GM10248 (cell line): ENCODE measurements at regions of chr6 and their contacts with region 1.

Region 1: DNA sequence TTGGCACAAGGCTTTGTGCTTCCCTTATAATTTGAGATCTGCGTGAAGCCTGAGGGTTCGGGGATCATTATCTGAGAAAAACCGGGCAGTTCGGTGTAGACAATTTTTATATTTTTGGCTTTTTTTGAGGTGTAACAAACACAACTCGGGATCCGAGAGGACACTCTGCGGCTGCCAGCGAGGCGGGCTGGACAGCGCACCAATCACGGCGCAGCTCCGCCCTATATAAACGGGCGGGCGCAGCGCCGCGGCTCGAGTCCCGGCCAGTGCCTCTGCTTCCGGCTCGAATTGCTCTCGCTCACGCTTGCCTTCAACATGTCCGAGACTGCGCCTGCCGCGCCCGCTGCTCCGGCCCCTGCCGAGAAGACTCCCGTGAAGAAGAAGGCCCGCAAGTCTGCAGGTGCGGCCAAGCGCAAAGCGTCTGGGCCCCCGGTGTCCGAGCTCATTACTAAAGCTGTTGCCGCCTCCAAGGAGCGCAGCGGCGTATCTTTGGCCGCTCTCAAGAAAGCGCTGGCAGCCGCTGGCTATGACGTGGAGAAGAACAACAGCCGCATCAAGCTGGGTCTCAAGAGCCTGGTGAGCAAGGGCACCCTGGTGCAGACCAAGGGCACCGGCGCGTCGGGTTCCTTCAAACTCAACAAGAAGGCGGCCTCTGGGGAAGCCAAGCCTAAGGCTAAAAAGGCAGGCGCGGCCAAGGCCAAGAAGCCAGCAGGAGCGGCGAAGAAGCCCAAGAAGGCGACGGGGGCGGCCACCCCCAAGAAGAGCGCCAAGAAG is 69.0 kb downstream of the HFE start:
- DNase-seq: peak; percentile 89
- CTCF ChIP-seq: no peak

Region 2: DNA sequence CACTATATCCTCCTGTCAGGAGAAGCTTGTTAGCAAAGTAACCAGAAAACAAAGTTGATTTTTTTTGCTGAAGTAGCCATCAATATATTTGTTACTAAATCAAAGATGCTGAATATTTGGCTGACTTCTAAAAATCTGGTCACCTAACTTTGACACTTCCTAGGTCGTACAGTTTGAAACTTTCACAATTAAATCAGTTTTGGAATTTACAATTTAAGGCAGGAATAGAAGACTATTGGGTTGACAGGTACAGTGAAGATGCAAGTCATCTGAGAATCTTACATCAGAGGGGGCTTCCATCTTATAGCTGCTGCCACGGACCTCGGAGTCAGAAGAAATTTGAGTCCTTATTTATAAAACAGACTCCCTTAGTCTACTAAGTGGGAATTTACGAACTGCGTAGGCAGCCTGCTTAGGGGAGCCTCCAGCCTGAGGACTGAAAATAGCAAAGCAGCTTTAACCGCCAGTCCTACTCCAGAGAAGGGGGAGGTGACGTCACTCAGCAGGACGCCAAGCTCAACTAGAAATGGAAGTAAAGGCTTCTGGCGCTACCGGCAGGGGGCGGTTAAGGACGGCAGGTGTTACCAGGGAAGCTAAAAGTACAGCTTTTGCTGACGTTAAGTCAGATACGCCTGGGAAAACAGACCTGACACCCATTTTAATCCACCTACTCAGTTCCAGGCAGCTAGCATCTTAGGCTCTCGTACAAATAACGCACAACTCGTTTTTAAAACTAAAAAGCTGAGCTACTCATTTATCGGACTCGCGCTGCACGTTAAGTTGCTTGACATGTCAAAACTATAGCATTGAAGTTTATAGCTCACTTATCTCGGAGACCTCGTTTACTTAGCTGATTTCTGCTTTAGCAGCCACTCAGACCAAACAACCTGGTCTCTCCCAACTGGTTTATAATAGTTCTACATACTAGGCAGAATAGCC is 130.1 kb before region 1 on chr6:
- CTCF ChIA-PET with region 1: interaction called, 4 read pairs
- POLR2A ChIA-PET with region 1: interaction called, 20 read pairs
- DNase-seq: peak; percentile 62
- CTCF ChIP-seq: peak; percentile 78

Region 3: GRCh38 chr6:26045065-26045927 is 111.0 kb before region 1 on chr6:
- CTCF ChIA-PET with region 1: no interaction called
- POLR2A ChIA-PET with region 1: interaction called, 27 read pairs
- DNase-seq: peak; percentile 88
- CTCF ChIP-seq: peak; percentile 12

Region 4: DNA sequence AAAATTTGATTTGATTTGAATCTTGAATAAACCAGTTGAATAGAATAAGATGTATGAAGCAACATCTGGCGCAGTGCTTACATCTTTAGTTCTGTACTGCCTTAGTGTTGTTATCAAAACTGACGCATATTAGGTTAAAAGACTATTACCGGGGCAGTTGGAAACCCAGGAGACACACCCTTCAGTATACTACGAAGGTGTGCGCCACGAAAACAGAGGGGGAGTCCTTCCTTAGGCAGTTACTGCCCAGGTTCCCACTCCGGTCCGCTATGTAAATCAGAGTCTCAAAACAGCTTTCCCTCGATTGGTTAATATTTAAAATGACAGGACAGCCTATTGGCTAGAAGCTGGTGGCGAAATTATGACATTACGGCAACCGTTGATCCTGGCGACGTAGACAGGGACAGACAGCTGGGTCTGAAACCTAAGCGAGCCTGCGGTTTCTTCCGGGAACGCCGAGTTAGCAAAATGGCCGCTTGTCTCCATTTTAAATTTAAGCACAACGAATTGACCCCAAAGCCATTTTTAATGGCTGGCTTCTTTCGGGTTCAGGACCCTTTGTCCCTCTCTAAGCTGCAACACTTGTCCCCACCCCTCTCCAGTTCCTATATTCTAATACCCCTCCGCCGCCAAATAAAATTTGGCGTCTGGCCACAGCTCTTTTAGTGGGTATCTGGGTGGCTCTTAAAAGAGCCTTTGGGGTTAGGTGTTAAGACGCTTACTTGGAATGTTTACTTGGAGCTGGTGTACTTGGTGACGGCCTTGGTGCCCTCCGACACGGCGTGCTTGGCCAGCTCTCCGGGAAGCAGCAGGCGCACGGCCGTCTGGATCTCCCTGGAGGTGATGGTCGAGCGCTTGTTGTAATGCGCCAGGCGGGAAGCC is 33.2 kb before region 1 on chr6:
- CTCF ChIA-PET with region 1: interaction called, 28 read pairs
- POLR2A ChIA-PET with region 1: interaction called, 211 read pairs
- DNase-seq: peak; percentile 83
- CTCF ChIP-seq: no peak

Region 5: DNA sequence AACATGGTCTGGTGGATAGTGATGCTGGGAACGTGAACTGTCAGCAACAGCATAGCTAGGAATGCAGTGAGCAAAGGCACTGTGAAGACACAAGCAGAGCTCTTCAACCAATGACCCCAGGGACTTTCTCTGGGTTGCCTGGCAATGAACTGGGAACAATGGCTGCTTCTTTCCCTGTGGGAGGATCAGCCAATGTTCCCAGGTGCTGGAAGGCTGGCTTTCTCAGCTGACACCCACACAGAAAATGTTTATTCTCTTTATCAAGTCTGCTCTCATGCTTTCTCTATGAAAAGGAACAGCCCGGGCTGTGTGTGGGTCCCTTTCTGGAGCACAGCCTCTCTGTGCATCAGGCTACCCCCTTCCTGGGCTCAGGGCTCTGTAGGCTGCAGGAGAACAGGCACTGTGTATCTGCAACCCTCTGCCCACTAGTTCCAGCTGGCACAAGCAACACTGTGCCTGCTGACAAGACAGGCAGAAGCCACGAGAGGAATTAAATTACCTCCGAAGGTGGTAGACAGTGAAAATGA is 14.8 kb before region 1 on chr6:
- CTCF ChIA-PET with region 1: interaction called, 5 read pairs
- POLR2A ChIA-PET with region 1: interaction called, 15 read pairs
- DNase-seq: no peak
- CTCF ChIP-seq: no peak

Region 6: DNA sequence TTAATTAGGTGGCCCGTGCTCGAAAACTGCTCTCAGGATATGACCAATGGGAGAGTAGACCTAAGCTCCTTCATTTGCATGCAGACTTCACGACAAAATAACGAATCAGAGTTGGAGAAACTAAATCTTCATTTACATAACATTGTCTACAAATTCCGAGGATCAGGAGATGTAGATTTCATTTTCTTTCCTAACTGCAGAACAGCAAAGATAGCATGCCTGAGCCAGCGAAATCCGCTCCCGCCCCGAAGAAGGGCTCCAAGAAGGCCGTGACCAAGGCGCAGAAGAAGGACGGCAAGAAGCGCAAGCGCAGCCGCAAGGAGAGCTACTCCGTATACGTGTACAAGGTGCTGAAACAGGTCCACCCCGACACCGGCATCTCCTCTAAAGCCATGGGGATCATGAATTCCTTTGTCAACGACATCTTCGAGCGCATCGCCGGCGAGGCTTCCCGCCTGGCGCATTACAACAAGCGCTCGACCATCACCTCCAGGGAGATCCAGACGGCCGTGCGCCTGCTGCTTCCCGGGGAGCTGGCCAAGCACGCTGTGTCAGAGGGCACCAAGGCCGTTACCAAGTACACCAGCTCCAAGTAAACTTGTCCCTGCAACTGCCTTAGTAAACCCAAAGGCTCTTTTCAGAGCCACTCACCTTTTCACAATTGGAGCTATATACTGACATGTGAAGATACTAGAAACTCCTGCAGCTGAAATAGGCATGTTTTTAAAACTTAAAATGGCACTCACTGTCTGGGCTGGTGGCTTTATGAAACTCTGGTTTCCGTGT is 27.5 kb after region 1 on chr6:
- CTCF ChIA-PET with region 1: interaction called, 3 read pairs
- POLR2A ChIA-PET with region 1: interaction called, 37 read pairs
- DNase-seq: peak; percentile 52
- CTCF ChIP-seq: no peak

Region 7: GRCh38 chr6:26249957-26250697 is 93.9 kb after region 1 on chr6:
- CTCF ChIA-PET with region 1: no interaction called
- POLR2A ChIA-PET with region 1: interaction called, 19 read pairs
- DNase-seq: no peak
- CTCF ChIP-seq: peak; percentile 59

Region 8: DNA sequence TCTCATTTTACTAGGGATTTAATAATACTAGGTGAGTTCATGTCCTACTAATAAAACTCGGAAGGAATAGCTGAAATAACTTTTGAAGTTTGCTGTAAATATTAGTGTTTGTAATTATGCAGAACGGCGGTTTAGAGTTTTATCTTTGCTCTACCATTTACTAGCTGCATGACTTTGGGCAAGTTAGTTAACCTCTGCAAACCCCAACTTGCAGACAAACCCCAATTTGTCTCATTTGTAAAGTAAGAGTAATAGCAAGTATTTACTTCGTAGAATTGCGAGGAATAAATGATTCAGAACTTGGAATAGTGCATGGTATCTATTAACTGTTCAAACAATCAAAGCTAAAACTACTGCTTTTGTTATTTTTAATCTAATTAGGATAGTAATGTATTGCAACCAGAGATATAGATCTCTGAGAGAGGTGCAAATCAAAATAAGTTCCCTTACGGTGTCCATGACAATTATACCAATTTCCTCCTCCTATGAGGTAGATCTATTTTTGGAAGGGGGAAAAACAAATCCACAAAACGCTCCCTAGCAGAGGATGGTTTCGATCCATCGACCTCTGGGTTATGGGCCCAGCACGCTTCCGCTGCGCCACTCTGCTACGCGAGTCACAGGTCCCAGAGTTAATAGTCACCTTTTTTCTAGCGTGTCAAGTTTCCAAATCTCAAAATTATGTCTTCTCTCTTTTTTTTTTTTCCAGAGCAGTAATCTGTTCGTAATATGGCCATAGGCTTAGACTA is 173.7 kb after region 1 on chr6:
- CTCF ChIA-PET with region 1: no interaction called
- POLR2A ChIA-PET with region 1: no interaction called
- DNase-seq: no peak
- CTCF ChIP-seq: no peak